Pancreas (tissue), 10 donors: ENCODE measurements at regions of chr3 and their contacts with region 1.

Region 1: DNA sequence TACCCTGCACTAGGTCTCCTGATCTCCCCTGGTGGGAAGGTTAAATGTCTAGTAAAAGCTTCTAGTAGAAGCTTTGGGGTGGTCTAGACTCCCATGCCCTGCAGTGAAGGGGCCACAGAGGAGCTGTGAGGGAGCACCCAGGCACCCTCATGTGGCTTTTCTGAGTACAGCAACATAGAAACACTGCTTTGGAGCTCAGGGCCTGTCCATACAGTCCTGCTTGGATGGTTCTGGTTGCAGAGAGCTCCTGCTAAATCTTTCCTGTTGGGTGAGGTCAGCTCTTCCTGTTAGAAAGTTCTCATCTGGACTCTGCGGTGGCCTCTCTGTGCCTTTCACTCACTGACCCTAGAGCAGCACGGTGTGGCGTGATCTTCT is 47.8 kb downstream of the GPD1L start:
- DNase-seq: no peak
- ATAC-seq: peak in 2 of 4 donors; percentile 38 to 43
- H3K4me3 ChIP-seq: no peak overlapping the region
- H3K27ac ChIP-seq: no peak overlapping the region
- H3K4me1 ChIP-seq: no peaks in the 10 kb centered on the region
- H3K27me3 ChIP-seq: no peaks in the 10 kb centered on the region
- CTCF ChIP-seq: no peak

Region 2: GRCh38 chr3:32026593-32026992 is 127.6 kb before region 1 on chr3:
- intact Hi-C with region 1: loop called in 2 of 3 experiments (anchors 10 kb)
- DNase-seq: no peak
- ATAC-seq: no peak
- H3K4me3 ChIP-seq: no peak overlapping the region
- H3K27ac ChIP-seq: no peak overlapping the region
- H3K4me1 ChIP-seq: no peaks in the 10 kb centered on the region
- H3K27me3 ChIP-seq: no peaks in the 10 kb centered on the region
- CTCF ChIP-seq: no peak

Region 3: GRCh38 chr3:32384938-32385337 is 230.7 kb after region 1 on chr3:
- intact Hi-C with region 1: no loop called
- DNase-seq: no peak
- ATAC-seq: peak in 3 of 4 donors; percentile 42 to 83 (median 72)
- H3K4me3 ChIP-seq: no peak overlapping the region
- H3K27ac ChIP-seq: no peak overlapping the region
- H3K4me1 ChIP-seq: no peaks in the 10 kb centered on the region
- H3K27me3 ChIP-seq: no peaks in the 10 kb centered on the region
- CTCF ChIP-seq: no peak